Right cardiac atrium (tissue), 5 donors: ENCODE measurements at regions of chr6 and their contacts with region 1.

Region 1: GRCh38 chr6:157873735-157874344 is 50.8 kb downstream of the SNX9 start:
- DNase-seq: peak; percentile 80 to 90 (median 88)
- ATAC-seq: peak; percentile 75 to 76
- H3K4me3 ChIP-seq: no peak overlapping the region
- H3K27ac ChIP-seq: no peak overlapping the region
- H3K4me1 ChIP-seq: no peaks in the 10 kb centered on the region
- H3K27me3 ChIP-seq: no peaks in the 10 kb centered on the region

Region 2: GRCh38 chr6:157756708-157757429 is 117.0 kb before region 1 on chr6:
- intact Hi-C with region 1: loop called (anchors 5 to 10 kb)
- DNase-seq: peak; percentile 89 to 95 (median 94)
- ATAC-seq: peak; percentile 86 to 90
- H3K4me3 ChIP-seq: no peak overlapping the region
- H3K27ac ChIP-seq: no peak overlapping the region
- H3K4me1 ChIP-seq: peaks cover 14% of the 10 kb centered on the region
- H3K27me3 ChIP-seq: no peaks in the 10 kb centered on the region

Region 3: DNA sequence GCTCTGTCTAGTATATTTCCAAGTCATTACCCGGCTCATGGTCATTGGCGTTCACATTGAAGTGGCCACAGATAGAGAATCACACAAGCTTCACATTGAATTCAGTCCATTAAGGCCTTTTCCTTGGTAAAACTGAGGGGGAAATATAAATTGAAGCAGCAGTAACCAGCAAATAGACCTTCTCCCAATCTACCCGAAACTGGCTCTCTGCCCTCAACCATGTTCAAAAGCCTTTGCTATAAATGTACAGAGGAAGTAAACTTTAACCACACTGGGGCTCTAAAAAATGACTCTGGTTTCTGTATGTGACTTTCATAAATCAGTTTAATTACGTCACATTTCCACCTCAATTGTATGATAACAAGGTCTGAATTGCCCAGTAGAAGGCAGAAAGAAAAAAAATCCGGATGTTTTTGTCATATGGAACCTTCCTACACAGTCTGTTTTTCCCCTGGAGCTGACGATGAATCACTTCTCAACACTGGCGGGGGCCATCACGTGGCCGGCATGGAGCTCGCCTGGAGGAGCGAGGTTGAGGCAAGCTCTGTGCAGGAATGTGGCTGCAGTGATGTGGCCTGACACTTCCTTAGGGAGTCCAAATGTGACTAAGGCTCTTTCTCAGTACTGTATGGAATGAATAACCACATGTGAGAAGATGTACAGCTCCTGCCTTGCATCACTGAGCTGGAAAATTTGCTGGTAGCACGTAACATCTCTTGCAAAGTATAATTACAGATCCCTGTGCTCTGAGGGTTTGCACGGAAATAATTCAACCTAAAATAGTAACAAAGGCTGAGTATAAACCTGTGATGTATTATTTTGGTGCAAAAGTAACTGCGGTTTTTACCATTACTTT is 109.4 kb before region 1 on chr6:
- intact Hi-C with region 1: loop called (anchors 5 to 10 kb)
- DNase-seq: peak; percentile 85 to 87 (median 86)
- ATAC-seq: peak; percentile 85 to 90
- H3K4me3 ChIP-seq: no peak overlapping the region
- H3K27ac ChIP-seq: no peak overlapping the region
- H3K4me1 ChIP-seq: peaks cover 2% of the 10 kb centered on the region
- H3K27me3 ChIP-seq: no peaks in the 10 kb centered on the region

Region 4: DNA sequence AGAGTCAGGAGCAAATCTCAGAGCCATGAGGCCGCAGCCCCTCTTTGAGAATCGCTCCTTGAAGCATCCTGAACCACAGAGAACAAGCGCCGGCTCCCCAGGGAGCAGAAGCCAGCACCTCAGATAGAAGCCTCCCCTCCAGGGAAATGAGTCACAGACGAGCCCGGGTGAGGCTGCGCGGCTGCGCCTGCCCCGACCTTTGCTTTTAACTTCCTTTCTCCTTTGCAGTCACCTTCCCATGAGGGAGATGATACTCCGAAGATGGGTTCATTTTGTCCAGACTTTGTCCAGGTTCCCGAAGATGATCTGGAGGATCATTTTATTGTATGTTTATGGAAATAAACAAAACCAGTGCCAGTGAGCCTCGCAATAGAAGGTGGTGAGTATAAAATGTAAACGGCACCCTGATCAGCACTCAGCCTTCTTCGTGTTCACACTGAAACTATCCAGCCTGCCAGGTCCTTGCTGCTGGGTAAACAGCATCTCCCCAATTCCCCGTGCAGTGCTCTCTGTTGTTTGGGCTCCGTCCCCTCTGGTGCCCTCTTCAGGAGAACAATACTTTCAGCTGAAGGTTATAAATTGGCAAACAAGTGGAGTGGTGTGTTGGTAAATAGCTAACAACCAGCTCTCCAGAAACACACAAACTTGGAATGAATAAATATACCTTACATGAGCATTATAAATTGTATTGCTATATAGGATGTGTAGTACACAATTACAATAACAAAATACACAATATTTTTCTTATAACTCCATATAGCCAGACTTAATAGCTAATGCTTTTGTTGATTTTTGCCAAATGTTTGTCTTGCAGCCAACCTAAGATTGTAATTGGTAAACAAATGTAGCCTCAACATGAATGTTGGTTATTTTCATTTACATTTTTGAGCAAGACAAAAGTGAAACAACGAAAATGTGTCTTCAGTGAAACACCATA is 644.6 kb after region 1 on chr6:
- intact Hi-C with region 1: no loop called
- DNase-seq: peak in 1 of 3 donors; percentile 67
- ATAC-seq: peak; percentile 69 to 73
- H3K4me3 ChIP-seq: peak overlapping the region; percentile 27
- H3K27ac ChIP-seq: no peak overlapping the region
- H3K4me1 ChIP-seq: no peaks in the 10 kb centered on the region
- H3K27me3 ChIP-seq: no peaks in the 10 kb centered on the region

Region 5: DNA sequence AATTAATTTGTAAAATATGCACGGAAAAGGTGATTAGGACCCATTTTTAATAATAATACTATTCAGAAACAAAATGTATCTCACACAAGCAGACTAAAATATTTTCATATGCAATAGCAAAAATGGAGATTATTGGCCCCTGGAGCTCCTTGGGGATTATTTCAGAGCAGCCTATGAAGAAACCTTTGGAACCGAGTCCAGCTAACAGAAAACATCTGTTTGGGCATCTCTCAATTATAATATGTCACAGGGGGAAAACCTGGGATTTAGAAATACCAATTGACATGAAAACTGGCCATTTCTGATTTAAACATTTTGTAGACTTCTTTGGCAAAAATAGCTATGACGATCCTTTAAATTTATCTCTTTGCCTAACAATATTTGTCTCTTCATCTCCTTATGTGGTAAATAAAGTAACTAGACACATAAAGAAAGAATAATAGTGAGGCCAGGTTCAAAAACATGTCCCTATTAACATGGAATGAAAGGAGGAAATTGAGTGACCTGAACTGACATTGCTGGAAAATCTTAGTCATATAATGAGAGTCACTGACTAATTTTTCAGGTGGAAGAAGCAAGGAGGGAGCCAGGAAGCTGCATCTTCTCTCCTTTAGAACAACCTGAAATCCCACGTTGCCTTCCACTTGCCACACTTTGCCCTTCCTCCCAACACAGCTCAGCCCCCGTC is 1620.2 kb after region 1 on chr6:
- intact Hi-C with region 1: no loop called
- DNase-seq: no peak
- ATAC-seq: no peak
- H3K4me3 ChIP-seq: no peak overlapping the region
- H3K27ac ChIP-seq: no peak overlapping the region
- H3K4me1 ChIP-seq: peaks cover 4% of the 10 kb centered on the region
- H3K27me3 ChIP-seq: no peaks in the 10 kb centered on the region